ENCODE measurements at regions of chr5 and their contacts with region 1.

Region 1: DNA sequence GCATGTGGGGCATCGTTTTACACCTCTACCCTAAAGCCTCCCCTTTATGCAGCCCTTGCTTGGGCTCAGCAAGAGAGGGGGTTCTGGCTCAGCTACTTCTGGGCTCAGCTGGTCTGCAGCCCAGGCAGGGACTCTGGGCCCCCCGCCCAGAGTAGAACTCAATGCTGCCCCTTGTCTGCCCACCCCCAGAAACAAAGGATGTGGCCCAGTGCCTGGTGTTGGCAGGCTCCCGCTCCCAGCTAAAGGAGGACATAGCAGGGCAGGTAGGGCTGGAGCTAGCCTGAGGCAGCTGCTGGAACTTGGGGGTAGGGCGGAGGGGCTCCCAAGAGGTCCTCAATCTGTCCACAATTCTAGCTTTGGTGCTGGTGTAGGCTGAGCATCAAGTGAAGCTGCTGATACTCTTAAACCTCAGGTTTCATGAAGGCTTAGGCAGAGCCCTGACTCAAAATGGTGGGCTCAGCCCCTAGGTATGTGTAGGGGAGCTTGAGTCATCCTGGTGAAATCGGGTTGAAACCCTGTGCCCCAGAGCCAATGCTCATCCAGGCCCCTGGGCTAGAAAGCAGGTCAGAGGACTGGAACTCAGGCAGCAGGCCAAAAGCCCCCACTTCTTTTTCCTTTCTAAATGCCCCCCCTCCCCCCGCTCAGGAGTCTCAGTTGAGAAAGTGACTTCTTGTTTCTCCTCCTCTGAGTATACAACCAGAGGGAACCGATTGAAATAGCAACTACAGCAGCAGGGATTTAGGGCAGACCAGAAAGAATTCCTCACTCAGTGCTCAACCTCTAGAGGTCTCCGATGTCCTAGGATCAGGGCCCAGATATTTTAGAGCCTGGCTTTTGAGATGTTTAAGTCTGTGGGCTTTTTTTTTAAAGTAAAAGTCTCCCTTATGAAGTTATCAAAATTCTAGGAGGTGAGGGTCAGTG is 11.4 kb downstream of the PSD2 start:
- DNase-seq: no peak
- H3K4me3 ChIP-seq: no peak overlapping the region
- H3K27ac ChIP-seq: no peak overlapping the region
- H3K4me1 ChIP-seq: no peaks in the 10 kb centered on the region
- H3K27me3 ChIP-seq: no peaks in the 10 kb centered on the region
- CTCF ChIP-seq: no peak
- POLR2A ChIP-seq: no peak

Region 2: GRCh38 chr5:138093036-138093435 is 1714.0 kb before region 1 on chr5:
- intact Hi-C with region 1: no loop called
- DNase-seq: no peak
- H3K4me3 ChIP-seq: no peak overlapping the region
- H3K27ac ChIP-seq: no peak overlapping the region
- H3K4me1 ChIP-seq: no peaks in the 10 kb centered on the region
- H3K27me3 ChIP-seq: peaks cover 0 to 4% of the 10 kb centered on the region in 2 donors
- CTCF ChIP-seq: no peak
- POLR2A ChIP-seq: no peak

Region 3: DNA sequence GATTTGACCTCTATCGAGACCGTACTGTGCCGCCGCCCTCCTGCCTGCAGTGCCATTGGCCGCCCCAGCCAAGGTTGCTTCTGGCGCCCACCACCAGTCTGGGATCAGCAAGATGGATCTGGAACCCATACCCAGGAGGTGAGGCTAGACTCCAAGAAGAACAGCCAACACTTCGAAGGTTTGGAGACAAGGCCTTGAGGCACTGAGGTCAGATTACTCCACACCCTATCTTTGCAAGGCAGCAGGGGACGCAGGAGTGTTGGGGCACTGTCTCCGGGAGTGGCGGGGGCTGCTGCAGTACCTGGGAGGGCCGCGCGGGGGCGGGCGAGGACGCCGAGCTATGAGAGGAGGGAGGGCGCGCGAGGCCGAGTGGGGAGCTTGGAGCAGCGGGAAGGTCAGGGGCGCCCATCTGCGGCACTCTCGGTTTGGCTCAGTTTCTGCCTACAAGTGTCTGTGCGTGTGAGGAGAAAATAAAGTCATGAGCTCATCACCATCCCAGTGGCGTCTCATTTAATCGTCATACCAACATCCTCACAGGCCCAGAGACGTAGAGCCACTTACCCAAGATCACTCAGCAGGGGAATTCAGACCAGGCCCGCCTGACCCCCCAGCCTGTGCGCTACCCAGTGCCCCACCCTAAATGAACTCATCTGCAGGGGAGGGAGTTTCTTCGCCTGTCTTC is 31.9 kb before region 1 on chr5:
- intact Hi-C with region 1: loop called (anchors 1 kb)
- DNase-seq: peak in 1 of 2 donors; percentile 70
- H3K4me3 ChIP-seq: peak overlapping the region in 1 of 3 donors; percentile 23
- H3K27ac ChIP-seq: no peak overlapping the region
- H3K4me1 ChIP-seq: no peaks in the 10 kb centered on the region
- H3K27me3 ChIP-seq: no peaks in the 10 kb centered on the region
- CTCF ChIP-seq: peak; percentile 68 to 78 (median 69)
- POLR2A ChIP-seq: no peak